ENCODE measurements at regions of chr11 and their contacts with region 1.

Region 1: GRCh38 chr11:77187776-77188632 is 60.0 kb downstream of the MYO7A start:
- DNase-seq: peak in 4 of 5 donors; percentile 45 to 57 (median 54)
- H3K4me3 ChIP-seq: no peak overlapping the region
- H3K4me3 Mint-ChIP-seq: no peak overlapping the region
- H3K27ac ChIP-seq: no peak overlapping the region
- H3K27ac Mint-ChIP-seq: peak overlapping the region in 2 of 7 donors; percentile 0 to 21
- H3K4me1 ChIP-seq: peaks cover 6% of the 10 kb centered on the region
- H3K4me1 Mint-ChIP-seq: peaks cover 0 to 10% (median 4%) of the 10 kb centered on the region in 4 donors
- H3K27me3 ChIP-seq: no peaks in the 10 kb centered on the region
- H3K27me3 Mint-ChIP-seq: no peaks in the 10 kb centered on the region

Region 2: GRCh38 chr11:77619576-77620198 is 431.7 kb after region 1 on chr11:
- CTCF ChIA-PET with region 1: interaction called, 5 read pairs
- POLR2A ChIA-PET with region 1: no interaction called
- intact Hi-C with region 1: loop called (anchors 5 kb)
- DNase-seq: peak in 4 of 5 donors; percentile 19 to 50 (median 44)
- H3K4me3 ChIP-seq: no peak overlapping the region
- H3K4me3 Mint-ChIP-seq: no peak overlapping the region
- H3K27ac ChIP-seq: no peak overlapping the region
- H3K27ac Mint-ChIP-seq: peak overlapping the region in 2 of 7 donors; percentile 0 to 59
- H3K4me1 ChIP-seq: no peaks in the 10 kb centered on the region
- H3K4me1 Mint-ChIP-seq: peaks cover 0 to 2% (median 0%) of the 10 kb centered on the region in 4 donors
- H3K27me3 ChIP-seq: no peaks in the 10 kb centered on the region
- H3K27me3 Mint-ChIP-seq: no peaks in the 10 kb centered on the region